ENCODE measurements at regions of chr20 and their contacts with region 1.

Region 1: DNA sequence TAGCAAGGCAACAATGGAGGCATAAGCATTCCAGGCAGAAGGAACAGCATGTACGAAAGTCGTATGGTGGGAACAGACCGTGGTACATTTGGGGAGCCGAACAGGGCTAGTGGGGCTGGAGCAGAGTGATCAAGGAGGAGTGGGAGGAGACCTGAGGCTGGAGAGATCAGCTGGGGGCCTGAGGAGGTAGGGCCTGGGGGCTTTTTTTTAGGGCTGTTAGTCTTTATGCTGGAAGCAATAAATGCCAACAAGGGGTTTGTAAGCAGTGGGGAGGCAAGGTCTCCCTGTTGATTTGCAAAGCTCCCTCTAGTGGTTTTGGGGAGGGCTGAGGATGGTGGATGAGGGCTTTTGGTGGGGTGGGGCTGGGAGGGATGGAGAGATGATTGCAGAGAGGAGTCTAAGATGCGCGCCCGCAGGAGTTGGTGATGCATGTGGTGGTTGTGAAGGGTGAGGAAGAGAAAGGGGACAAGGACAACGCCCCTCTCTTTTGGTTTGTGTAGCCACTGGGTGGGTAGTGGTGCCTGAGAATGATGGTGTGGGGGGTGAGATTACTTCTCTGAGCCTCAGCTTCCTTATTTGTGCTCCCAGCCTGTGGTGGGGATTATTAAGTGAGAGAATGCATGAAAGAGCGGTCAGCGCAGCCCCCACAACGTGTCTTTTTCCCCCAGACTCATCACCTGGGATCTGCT is 74.1 kb upstream of the TOX2 start:
- DNase-seq: no peak
- ATAC-seq: no peak
- H3K4me3 ChIP-seq: no peak overlapping the region
- H3K27ac ChIP-seq: no peak overlapping the region
- H3K4me1 ChIP-seq: no peaks in the 10 kb centered on the region
- H3K27me3 ChIP-seq: no peaks in the 10 kb centered on the region

Region 2: GRCh38 chr20:43914311-43915210 is 74.0 kb after region 1 on chr20 and contains the start of gene TOX2:
- intact Hi-C with region 1: loop called in 1 of 2 experiments (anchors 5 kb)
- DNase-seq: peak; percentile 65 to 83
- ATAC-seq: peak; percentile 47
- H3K4me3 ChIP-seq: peak within 1 kb of the TSS; percentile 38 to 83
- H3K27ac ChIP-seq: no peak within 1 kb of the TSS
- H3K4me1 ChIP-seq: no peaks in the 10 kb centered on the region
- H3K27me3 ChIP-seq: no peaks in the 10 kb centered on the region
- total RNA-seq, gene TOX2: 11.9 to 17.2 TPM

Measured in aorta (tissue), 5 donors.